Mammary epithelial cell (primary cell): ENCODE measurements at regions of chr2 and their contacts with region 1.

Region 1: DNA sequence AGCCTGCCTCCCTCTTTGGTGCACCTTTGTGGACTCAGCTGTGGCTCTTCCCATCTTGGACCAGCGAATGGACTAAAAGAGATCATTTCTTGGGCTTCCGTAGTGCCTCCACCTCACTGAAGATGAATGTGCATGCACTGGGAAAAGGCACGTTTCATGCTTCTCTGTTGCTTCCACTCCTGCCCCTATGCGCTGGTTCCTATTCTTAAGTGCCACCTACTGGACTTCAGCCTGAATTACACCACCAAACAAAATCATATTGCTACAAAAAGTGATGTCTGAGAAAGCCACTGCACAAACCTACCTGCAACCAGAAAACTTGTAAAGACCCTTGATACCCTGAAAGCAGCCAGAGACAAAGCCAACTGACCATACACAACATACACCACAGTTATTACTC is 695.6 kb downstream of the TSN start:
- DNase-seq: peak; percentile 42
- H3K4me3 ChIP-seq: no peak overlapping the region
- H3K27ac ChIP-seq: no peak overlapping the region
- H3K4me1 ChIP-seq: no peaks in the 10 kb centered on the region
- H3K27me3 ChIP-seq: no peaks in the 10 kb centered on the region
- CTCF ChIP-seq: peak; percentile 57 to 78

Region 2: GRCh38 chr2:122300758-122301157 is 150.3 kb before region 1 on chr2:
- CTCF ChIA-PET with region 1: no interaction called
- dilution Hi-C with region 1: no loop called
- in situ Hi-C with region 1: no loop called
- intact Hi-C with region 1: loop called (anchors 10 kb)
- DNase-seq: peak; percentile 6
- H3K4me3 ChIP-seq: no peak overlapping the region
- H3K27ac ChIP-seq: no peak overlapping the region
- H3K4me1 ChIP-seq: no peaks in the 10 kb centered on the region
- H3K27me3 ChIP-seq: no peaks in the 10 kb centered on the region
- CTCF ChIP-seq: peak in 1 of 2 donors; percentile 22